ENCODE measurements at regions of chr1 and their contacts with region 1.

Region 1: GRCh38 chr1:216502528-216503162 is 79.4 kb upstream of the USH2A start:
- DNase-seq: no peak
- ATAC-seq: no peak
- H3K4me3 ChIP-seq: no peak overlapping the region
- H3K27ac ChIP-seq: no peak overlapping the region
- H3K4me1 ChIP-seq: peaks cover 0 to 4% (median 0%) of the 10 kb centered on the region in 12 donors
- H3K27me3 ChIP-seq: no peaks in the 10 kb centered on the region
- CTCF ChIP-seq: no peak
- POLR2A ChIP-seq: no peak

Region 2: DNA sequence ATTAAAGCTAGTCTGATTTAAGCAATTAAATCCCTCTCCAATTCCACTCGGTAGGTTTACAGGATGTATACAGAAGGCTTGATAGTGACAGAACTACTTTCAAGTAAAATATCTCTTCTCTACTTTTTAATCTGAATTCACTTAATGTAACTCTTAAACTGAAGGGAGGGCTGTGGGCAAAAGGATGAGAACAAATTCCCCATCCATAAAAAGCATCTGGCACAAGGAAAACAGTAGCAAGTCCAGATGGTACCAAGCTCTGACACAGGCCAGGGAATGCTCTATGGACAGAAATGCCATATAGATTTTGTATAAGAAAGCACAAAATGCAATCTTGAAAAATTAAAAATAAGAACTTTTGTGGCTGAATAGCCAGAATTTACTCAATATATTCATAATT is 26.3 kb before region 1 on chr1:
- intact Hi-C with region 1: loop called in 1 of 10 experiments (anchors 2 kb)
- DNase-seq: no peak
- ATAC-seq: no peak
- H3K4me3 ChIP-seq: no peak overlapping the region
- H3K27ac ChIP-seq: no peak overlapping the region
- H3K4me1 ChIP-seq: no peaks in the 10 kb centered on the region
- H3K27me3 ChIP-seq: no peaks in the 10 kb centered on the region
- CTCF ChIP-seq: no peak
- POLR2A ChIP-seq: no peak

Region 3: GRCh38 chr1:216535059-216535458 is 32.4 kb after region 1 on chr1:
- intact Hi-C with region 1: no loop called
- DNase-seq: no peak
- ATAC-seq: no peak
- H3K4me3 ChIP-seq: no peak overlapping the region
- H3K27ac ChIP-seq: no peak overlapping the region
- H3K4me1 ChIP-seq: peaks cover 0 to 6% (median 0%) of the 10 kb centered on the region in 12 donors
- H3K27me3 ChIP-seq: no peaks in the 10 kb centered on the region
- CTCF ChIP-seq: no peak
- POLR2A ChIP-seq: no peak

Region 4: DNA sequence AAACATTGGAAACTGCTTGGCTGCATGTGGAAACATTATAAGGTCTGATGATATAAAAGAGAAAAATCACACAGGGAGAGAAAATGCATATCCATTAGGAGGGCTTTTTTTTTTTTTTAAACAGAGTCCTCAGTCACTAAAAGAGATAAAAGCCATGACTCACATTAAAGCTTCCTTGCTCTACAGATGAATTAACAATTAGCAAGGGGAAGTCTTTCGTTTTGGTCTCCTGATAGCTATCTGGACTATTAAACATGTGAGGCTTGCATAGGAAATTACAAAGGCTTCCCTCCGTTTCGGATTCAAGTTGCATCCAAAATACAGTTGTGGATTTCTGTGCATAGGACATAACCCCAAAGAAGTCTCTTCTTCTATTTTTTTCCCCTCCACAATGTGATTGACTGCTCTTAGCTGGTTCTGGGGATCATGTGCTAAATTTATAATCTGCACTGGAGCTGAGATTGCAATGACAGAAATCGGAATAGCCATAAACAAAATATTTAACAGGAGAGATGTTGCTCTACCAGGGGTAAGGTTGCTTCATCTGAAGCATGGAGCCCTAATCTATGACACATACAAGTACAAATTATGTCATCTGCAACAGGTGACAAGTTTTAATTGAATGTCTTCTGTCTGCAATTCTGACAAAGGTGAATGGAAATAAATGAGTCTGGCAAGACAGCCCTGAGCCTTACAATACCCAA is 73.7 kb after region 1 on chr1:
- intact Hi-C with region 1: no loop called
- DNase-seq: no peak
- ATAC-seq: peak in 1 of 4 donors; percentile 56
- H3K4me3 ChIP-seq: no peak overlapping the region
- H3K27ac ChIP-seq: no peak overlapping the region
- H3K4me1 ChIP-seq: peaks cover 0 to 22% (median 1%) of the 10 kb centered on the region in 12 donors
- H3K27me3 ChIP-seq: no peaks in the 10 kb centered on the region
- CTCF ChIP-seq: no peak
- POLR2A ChIP-seq: no peak

Region 5: GRCh38 chr1:217040711-217041455 is 538.2 kb after region 1 on chr1:
- intact Hi-C with region 1: loop called in 1 of 10 experiments (anchors 5 kb)
- DNase-seq: no peak
- ATAC-seq: no peak
- H3K4me3 ChIP-seq: no peak overlapping the region
- H3K27ac ChIP-seq: no peak overlapping the region
- H3K4me1 ChIP-seq: peaks cover 0 to 21% (median 3%) of the 10 kb centered on the region in 12 donors
- H3K27me3 ChIP-seq: no peaks in the 10 kb centered on the region
- CTCF ChIP-seq: no peak
- POLR2A ChIP-seq: no peak

Measured in heart left ventricle (tissue), 16 donors.